ENCODE measurements at regions of chr12 and their contacts with region 1.

Region 1: DNA sequence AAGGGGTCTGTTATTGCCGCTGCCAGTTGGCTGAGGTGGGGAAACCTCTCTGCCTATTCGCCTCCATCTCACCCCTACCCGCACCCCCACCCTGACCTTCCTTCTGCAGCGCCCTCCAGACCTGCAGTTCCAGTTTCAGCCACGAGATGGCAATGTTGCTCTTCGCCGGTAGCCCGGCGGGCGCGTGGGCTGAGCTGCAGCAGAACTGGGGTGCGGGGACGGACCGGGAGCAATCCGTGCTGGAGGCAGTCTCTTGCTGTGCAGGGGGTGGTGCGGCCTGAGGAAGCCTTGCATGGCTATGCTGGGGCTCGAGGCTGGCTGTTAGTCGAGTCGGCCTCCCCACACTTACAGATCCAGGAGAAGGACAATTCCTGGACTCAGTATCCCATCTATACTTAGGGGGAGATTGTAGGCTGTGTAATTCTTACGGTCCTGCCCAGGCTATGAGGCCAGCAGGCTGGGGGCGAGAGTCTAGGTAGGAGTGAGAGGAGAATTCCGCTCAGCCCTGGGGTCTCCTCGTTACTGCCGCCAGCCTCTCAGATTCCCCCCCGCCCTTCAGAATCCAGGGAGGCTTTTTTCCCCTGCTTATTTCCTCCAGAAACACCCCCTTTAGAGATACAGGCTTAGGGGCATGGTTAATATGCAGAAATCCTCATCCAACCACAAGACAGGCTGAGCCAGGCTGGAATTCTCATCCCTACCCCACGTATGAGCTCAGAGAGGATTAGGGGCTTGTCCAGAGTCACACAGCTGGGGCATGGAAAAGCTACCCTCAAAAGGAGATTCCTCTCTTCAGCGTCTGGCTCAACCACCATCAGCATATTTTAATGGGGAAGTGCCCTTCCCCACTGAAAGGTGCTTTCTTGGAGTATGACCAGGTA is 118.2 kb downstream of the AACS start:
- DNase-seq: peak; percentile 75
- H3K4me3 Mint-ChIP-seq: no peak overlapping the region
- H3K27ac Mint-ChIP-seq: no peak overlapping the region
- H3K4me1 Mint-ChIP-seq: peaks cover 5% of the 10 kb centered on the region
- H3K27me3 Mint-ChIP-seq: peaks cover 48% of the 10 kb centered on the region

Region 2: GRCh38 chr12:125203145-125203765 is 19.8 kb after region 1 on chr12:
- CTCF ChIA-PET with region 1: interaction called, 15 read pairs
- POLR2A ChIA-PET with region 1: no interaction called
- DNase-seq: no peak
- H3K4me3 Mint-ChIP-seq: no peak overlapping the region
- H3K27ac Mint-ChIP-seq: no peak overlapping the region
- H3K4me1 Mint-ChIP-seq: no peaks in the 10 kb centered on the region
- H3K27me3 Mint-ChIP-seq: peaks cover 23% of the 10 kb centered on the region

Region 3: DNA sequence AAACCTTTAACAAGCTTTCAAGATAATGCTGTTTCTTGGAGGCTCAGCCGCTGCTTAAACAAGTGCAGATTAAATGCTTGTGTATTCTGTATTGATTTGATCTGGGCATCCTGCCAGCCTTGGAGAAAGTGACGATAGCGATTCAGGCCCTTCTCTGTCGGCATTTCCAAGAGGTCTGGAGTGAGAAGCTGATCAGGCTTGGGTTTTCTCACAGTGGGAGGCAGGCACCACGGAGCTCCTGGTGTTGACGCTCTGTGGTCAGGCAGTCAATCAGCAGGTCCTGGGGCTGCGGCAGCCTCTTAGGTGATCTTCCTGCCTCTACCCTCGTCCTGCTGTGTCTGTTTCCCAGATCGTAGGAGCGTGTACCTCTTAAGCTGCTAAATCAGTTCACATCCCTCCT is 37.0 kb after region 1 on chr12:
- CTCF ChIA-PET with region 1: no interaction called
- POLR2A ChIA-PET with region 1: no interaction called
- DNase-seq: no peak
- H3K4me3 Mint-ChIP-seq: no peak overlapping the region
- H3K27ac Mint-ChIP-seq: no peak overlapping the region
- H3K4me1 Mint-ChIP-seq: no peaks in the 10 kb centered on the region
- H3K27me3 Mint-ChIP-seq: peaks cover 6% of the 10 kb centered on the region

Region 4: GRCh38 chr12:125402874-125403789 is 219.7 kb after region 1 on chr12:
- CTCF ChIA-PET with region 1: interaction called, 50 read pairs
- POLR2A ChIA-PET with region 1: no interaction called
- DNase-seq: no peak
- H3K4me3 Mint-ChIP-seq: no peak overlapping the region
- H3K27ac Mint-ChIP-seq: no peak overlapping the region
- H3K4me1 Mint-ChIP-seq: peaks cover 13% of the 10 kb centered on the region
- H3K27me3 Mint-ChIP-seq: peaks cover 5% of the 10 kb centered on the region